ENCODE measurements at regions of chr18 and their contacts with region 1.

Region 1: GRCh38 chr18:23871410-23871809 is 143.1 kb upstream of the TTC39C start:
- DNase-seq: peak; percentile 57 to 93 (median 81)
- ATAC-seq: peak; percentile 93
- H3K4me3 ChIP-seq: no peak overlapping the region
- H3K4me3 Mint-ChIP-seq: peak overlapping the region; percentile 71
- H3K27ac ChIP-seq: peak overlapping the region; percentile 5 to 67
- H3K27ac Mint-ChIP-seq: peak overlapping the region; percentile 98
- H3K4me1 ChIP-seq: peaks cover 48% of the 10 kb centered on the region
- H3K4me1 Mint-ChIP-seq: peaks cover 55% of the 10 kb centered on the region
- H3K27me3 ChIP-seq: no peaks in the 10 kb centered on the region
- H3K27me3 Mint-ChIP-seq: no peaks in the 10 kb centered on the region
- CTCF ChIP-seq: no peak

Region 2: GRCh38 chr18:23752796-23753195 is 118.6 kb before region 1 on chr18:
- CTCF ChIA-PET with region 1: no interaction called
- POLR2A ChIA-PET with region 1: no interaction called
- intact Hi-C with region 1: no loop called
- DNase-seq: no peak
- ATAC-seq: no peak
- H3K4me3 ChIP-seq: no peak overlapping the region
- H3K4me3 Mint-ChIP-seq: no peak overlapping the region
- H3K27ac ChIP-seq: no peak overlapping the region
- H3K27ac Mint-ChIP-seq: no peak overlapping the region
- H3K4me1 ChIP-seq: no peaks in the 10 kb centered on the region
- H3K4me1 Mint-ChIP-seq: no peaks in the 10 kb centered on the region
- H3K27me3 ChIP-seq: no peaks in the 10 kb centered on the region
- H3K27me3 Mint-ChIP-seq: no peaks in the 10 kb centered on the region
- CTCF ChIP-seq: no peak

Region 3: GRCh38 chr18:23828426-23828825 is 43.0 kb before region 1 on chr18:
- CTCF ChIA-PET with region 1: interaction called, 4 read pairs
- POLR2A ChIA-PET with region 1: no interaction called
- intact Hi-C with region 1: loop called (anchors 2 to 5 kb)
- DNase-seq: peak in 8 of 9 experiments; percentile 25 to 91 (median 52)
- ATAC-seq: peak; percentile 98
- H3K4me3 ChIP-seq: no peak overlapping the region
- H3K4me3 Mint-ChIP-seq: no peak overlapping the region
- H3K27ac ChIP-seq: peak overlapping the region; percentile 32 to 73
- H3K27ac Mint-ChIP-seq: peak overlapping the region; percentile 56
- H3K4me1 ChIP-seq: peaks cover 12% of the 10 kb centered on the region
- H3K4me1 Mint-ChIP-seq: peaks cover 17% of the 10 kb centered on the region
- H3K27me3 ChIP-seq: no peaks in the 10 kb centered on the region
- H3K27me3 Mint-ChIP-seq: peaks cover under 1% of the 10 kb centered on the region
- CTCF ChIP-seq: no peak

Region 4: GRCh38 chr18:23884681-23885375 is 13.4 kb after region 1 on chr18:
- CTCF ChIA-PET with region 1: interaction called, 4 read pairs
- POLR2A ChIA-PET with region 1: interaction called, 4 read pairs
- intact Hi-C with region 1: loop called in 1 of 2 experiments (anchors 2 kb)
- DNase-seq: peak in 3 of 9 experiments; percentile 23 to 28 (median 26)
- ATAC-seq: peak; percentile 63
- H3K4me3 ChIP-seq: no peak overlapping the region
- H3K4me3 Mint-ChIP-seq: no peak overlapping the region
- H3K27ac ChIP-seq: no peak overlapping the region
- H3K27ac Mint-ChIP-seq: no peak overlapping the region
- H3K4me1 ChIP-seq: peaks cover 16% of the 10 kb centered on the region
- H3K4me1 Mint-ChIP-seq: peaks cover 30% of the 10 kb centered on the region
- H3K27me3 ChIP-seq: no peaks in the 10 kb centered on the region
- H3K27me3 Mint-ChIP-seq: no peaks in the 10 kb centered on the region
- CTCF ChIP-seq: no peak

Measured in CD8-positive, alpha-beta T cell (primary cell).